CD8-positive, alpha-beta memory T cell (primary cell): ENCODE measurements at regions of chr1 and their contacts with region 1.

Region 1: GRCh38 chr1:22052115-22053016 is at the start of gene CDC42:
- DNase-seq: peak; percentile 94 to 98 (median 97)
- H3K4me3 ChIP-seq: peak within 1 kb of the TSS; percentile 83
- H3K4me3 Mint-ChIP-seq: peak within 1 kb of the TSS; percentile 98 to 100 (median 100)
- H3K27ac ChIP-seq: peak within 1 kb of the TSS; percentile 87
- H3K27ac Mint-ChIP-seq: peak within 1 kb of the TSS; percentile 99 to 100 (median 100)
- H3K4me1 ChIP-seq: peaks cover 50% of the 10 kb centered on the region
- H3K4me1 Mint-ChIP-seq: peaks cover 51 to 68% (median 66%) of the 10 kb centered on the region in 3 donors
- H3K27me3 ChIP-seq: no peaks in the 10 kb centered on the region
- H3K27me3 Mint-ChIP-seq: peaks cover 0 to 2% of the 10 kb centered on the region in 2 donors
- total RNA-seq, gene CDC42: 317 to 347 TPM

Region 2: DNA sequence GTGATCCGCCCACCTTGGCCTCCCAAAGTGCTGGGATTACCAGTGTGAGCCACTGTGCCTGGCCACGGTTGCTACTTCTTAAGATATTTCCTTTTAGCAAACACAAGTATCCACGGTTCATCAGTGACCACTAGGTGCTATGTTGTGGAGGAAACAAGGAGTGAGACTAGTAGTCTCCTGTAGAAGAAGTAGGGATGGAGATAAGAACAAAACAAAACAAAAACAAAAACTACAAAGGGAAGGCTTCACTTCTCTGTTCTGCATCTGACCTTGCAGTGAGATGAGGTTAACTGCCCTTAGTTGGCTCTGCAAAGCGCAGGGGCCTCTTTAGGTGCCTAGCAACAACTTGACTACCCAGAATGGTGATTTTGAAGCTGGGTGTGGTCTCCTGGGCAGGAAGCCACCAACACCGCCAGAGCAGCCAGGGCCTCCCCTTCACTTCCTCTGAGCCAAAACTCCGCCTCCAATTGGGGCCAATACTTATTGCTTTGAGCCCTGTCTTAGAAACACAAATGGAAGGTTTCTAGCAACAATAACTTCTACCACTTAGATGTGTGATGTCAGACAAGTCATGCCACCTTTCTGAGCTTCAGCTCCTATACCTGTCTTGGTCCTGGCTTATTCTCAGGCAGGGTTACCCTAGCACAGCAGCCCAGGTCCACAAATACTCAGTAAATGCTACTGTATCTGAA is 12.6 kb before region 1 on chr1:
- CTCF ChIA-PET with region 1: interaction called, 42 read pairs
- POLR2A ChIA-PET with region 1: interaction called, 90 read pairs
- DNase-seq: peak; percentile 81 to 97 (median 96)
- H3K4me3 ChIP-seq: peak overlapping the region; percentile 30
- H3K4me3 Mint-ChIP-seq: peak overlapping the region; percentile 63 to 85 (median 81)
- H3K27ac ChIP-seq: peak overlapping the region; percentile 84
- H3K27ac Mint-ChIP-seq: peak overlapping the region; percentile 97 to 99 (median 99)
- H3K4me1 ChIP-seq: peaks cover 67% of the 10 kb centered on the region
- H3K4me1 Mint-ChIP-seq: peaks cover 43 to 57% (median 54%) of the 10 kb centered on the region in 3 donors
- H3K27me3 ChIP-seq: no peaks in the 10 kb centered on the region
- H3K27me3 Mint-ChIP-seq: no peaks in the 10 kb centered on the region

Region 3: GRCh38 chr1:22105611-22106207 is 53.3 kb after region 1 on chr1:
- CTCF ChIA-PET with region 1: interaction called, 3 read pairs
- POLR2A ChIA-PET with region 1: interaction called, 13 read pairs
- DNase-seq: peak in 2 of 5 donors; percentile 39 to 53
- H3K4me3 ChIP-seq: no peak overlapping the region
- H3K4me3 Mint-ChIP-seq: peak overlapping the region in 5 of 7 donors; percentile 30 to 66 (median 56)
- H3K27ac ChIP-seq: no peak overlapping the region
- H3K27ac Mint-ChIP-seq: peak overlapping the region in 7 of 8 donors; percentile 80 to 94 (median 87)
- H3K4me1 ChIP-seq: peaks cover 42% of the 10 kb centered on the region
- H3K4me1 Mint-ChIP-seq: peaks cover 64 to 84% (median 81%) of the 10 kb centered on the region in 3 donors
- H3K27me3 ChIP-seq: no peaks in the 10 kb centered on the region
- H3K27me3 Mint-ChIP-seq: no peaks in the 10 kb centered on the region